ENCODE measurements at regions of chr15 and their contacts with region 1.

Region 1: DNA sequence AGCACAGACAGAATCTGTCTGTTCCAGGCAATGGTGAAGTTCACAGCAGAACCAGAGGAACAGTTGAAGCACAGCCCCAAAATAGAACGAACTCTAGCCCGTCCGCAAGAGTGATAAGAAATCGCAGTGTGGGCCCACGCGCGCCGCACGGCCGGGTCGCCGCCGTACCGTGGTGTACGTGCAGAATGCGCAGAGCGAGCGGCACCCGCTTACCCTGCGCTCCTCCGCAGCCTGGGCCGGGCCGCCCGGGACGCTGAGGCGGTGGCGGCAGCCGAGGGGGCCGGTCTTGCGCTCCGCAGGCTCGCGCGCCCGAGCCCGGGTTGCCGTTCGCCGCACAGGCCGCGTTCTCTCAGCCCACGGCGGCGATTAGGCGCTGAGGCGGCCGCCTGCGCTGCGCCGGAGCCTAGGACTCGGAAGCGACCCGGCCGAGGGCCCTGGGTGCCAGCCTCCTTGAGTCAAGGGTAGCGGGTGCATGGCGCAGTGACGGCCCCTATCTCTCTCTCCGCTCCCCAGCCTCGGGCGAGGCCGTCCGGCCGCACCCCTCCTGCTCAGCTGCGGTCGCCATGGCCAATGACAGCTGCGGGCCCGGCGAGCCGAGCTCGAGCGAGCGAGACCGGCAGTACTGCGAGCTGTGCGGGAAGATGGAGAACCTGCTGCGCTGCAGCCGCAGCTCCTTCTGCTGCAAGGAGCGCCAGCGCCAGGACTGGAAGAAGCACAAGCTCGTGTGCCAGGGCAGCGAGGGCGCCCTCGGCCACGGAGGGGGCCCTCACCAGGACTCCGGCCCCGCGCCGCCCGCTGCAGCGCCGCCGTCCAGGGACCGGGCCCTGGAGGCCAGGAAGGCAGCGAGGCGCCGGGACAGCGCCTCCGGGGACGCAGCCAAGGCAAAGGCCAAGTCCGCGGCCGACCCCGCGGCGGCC is 20.5 kb downstream of the WDR73 start:
- DNase-seq: peak; percentile 46 to 63
- H3K4me3 ChIP-seq: peak overlapping the region; percentile 70
- H3K27ac ChIP-seq: no peak overlapping the region
- H3K4me1 ChIP-seq: peaks cover 33% of the 10 kb centered on the region
- H3K27me3 ChIP-seq: no peaks in the 10 kb centered on the region
- CTCF ChIP-seq: no peak

Region 2: DNA sequence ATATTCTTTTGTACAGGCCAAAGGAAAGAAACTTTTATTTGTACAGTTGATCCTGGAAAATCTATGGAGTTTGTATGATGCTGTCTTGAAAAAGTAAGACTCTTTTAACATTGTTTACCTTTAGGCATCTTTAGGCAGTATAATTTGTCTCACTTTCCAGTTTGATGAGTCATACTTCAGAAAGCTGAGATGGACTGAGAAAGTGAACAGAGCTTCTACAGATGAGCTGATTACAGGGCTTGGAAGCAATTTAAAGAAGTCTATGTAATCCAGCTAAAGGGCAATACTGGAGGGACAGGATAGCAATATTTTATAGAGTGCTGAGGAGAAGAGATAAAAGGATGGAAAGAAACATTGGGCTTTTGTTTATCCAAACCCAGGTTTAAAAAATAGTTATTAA is 521.5 kb before region 1 on chr15:
- CTCF ChIA-PET with region 1: no interaction called
- POLR2A ChIA-PET with region 1: no interaction called
- intact Hi-C with region 1: no loop called
- DNase-seq: no peak
- H3K4me3 ChIP-seq: no peak overlapping the region
- H3K27ac ChIP-seq: no peak overlapping the region
- H3K4me1 ChIP-seq: no peaks in the 10 kb centered on the region
- H3K27me3 ChIP-seq: peaks cover 11% of the 10 kb centered on the region; the same call in 1 of the 2 replicates
- CTCF ChIP-seq: no peak

Region 3: DNA sequence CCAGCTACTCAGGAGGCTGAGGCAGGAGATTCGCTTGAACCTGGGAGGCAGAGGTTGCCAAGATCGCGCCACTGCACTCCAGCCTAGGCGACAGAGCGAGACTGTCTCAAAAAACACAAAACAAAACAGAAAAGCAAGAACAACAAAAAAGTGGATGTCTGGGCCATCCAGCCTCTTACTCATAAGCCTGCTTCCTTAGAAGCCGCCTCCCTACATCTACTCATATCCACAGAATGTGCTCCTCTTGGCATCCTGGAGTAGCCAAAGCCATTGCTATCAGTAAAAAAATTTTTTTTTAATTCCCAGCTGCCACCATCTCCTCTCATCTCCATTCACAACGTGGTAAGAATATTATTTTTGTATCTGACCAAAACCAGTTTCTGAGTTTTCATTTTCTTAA is 21.9 kb before region 1 on chr15:
- CTCF ChIA-PET with region 1: no interaction called
- POLR2A ChIA-PET with region 1: no interaction called
- intact Hi-C with region 1: no loop called
- DNase-seq: no peak
- H3K4me3 ChIP-seq: no peak overlapping the region
- H3K27ac ChIP-seq: no peak overlapping the region
- H3K4me1 ChIP-seq: no peaks in the 10 kb centered on the region
- H3K27me3 ChIP-seq: no peaks in the 10 kb centered on the region
- CTCF ChIP-seq: no peak

Region 4: GRCh38 chr15:84697236-84697990 is 63.8 kb after region 1 on chr15:
- CTCF ChIA-PET with region 1: interaction called, 11 read pairs
- POLR2A ChIA-PET with region 1: no interaction called
- intact Hi-C with region 1: no loop called
- DNase-seq: no peak
- H3K4me3 ChIP-seq: no peak overlapping the region
- H3K27ac ChIP-seq: 0 out of 2 replicates have a peak overlapping the region, but pooled peaks have one; percentile 19
- H3K4me1 ChIP-seq: no peaks in the 10 kb centered on the region
- H3K27me3 ChIP-seq: no peaks in the 10 kb centered on the region
- CTCF ChIP-seq: no peak

Region 5: GRCh38 chr15:84761607-84762131 is 128.1 kb after region 1 on chr15:
- CTCF ChIA-PET with region 1: no interaction called
- POLR2A ChIA-PET with region 1: no interaction called
- intact Hi-C with region 1: no loop called
- DNase-seq: no peak
- H3K4me3 ChIP-seq: no peak overlapping the region
- H3K27ac ChIP-seq: no peak overlapping the region
- H3K4me1 ChIP-seq: no peaks in the 10 kb centered on the region
- H3K27me3 ChIP-seq: no peaks in the 10 kb centered on the region
- CTCF ChIP-seq: no peak

Region 6: GRCh38 chr15:84844964-84845363 is 211.4 kb after region 1 on chr15:
- CTCF ChIA-PET with region 1: interaction called, 15 read pairs
- POLR2A ChIA-PET with region 1: no interaction called
- intact Hi-C with region 1: no loop called
- DNase-seq: peak in 1 of 2 experiments; percentile 5
- H3K4me3 ChIP-seq: no peak overlapping the region
- H3K27ac ChIP-seq: 0 out of 2 replicates have a peak overlapping the region, but pooled peaks have one; percentile 25
- H3K4me1 ChIP-seq: peaks cover 33% of the 10 kb centered on the region
- H3K27me3 ChIP-seq: no peaks in the 10 kb centered on the region
- CTCF ChIP-seq: no peak